ENCODE measurements at regions of chr13 and their contacts with region 1.

Region 1: DNA sequence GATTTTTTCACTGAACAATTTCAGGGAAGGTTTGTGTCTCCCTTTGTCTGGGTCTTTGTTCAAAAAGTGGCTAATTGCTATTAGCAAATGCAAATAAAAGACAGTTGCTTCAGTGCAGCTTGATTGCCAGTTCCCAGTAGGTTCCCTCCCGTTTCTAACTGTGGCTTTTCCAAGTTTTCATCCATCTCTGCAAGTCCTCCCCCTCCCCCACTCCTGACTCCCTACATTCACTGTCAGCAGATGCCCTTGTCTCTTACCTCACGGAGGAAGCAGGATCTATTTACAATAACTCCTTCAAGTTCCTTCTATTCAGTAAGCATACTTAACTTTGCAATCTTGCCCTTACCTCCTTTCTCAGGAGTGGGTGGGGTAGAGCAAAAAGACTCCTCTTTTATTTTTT is 55.4 kb upstream of the SCEL start:
- DNase-seq: no peak
- ATAC-seq: no peak
- H3K4me3 ChIP-seq: no peak overlapping the region
- H3K27ac ChIP-seq: no peak overlapping the region
- H3K4me1 ChIP-seq: no peaks in the 10 kb centered on the region
- H3K27me3 ChIP-seq: peaks cover 2% of the 10 kb centered on the region; the same call in 1 of the 2 replicates
- CTCF ChIP-seq: no peak
- POLR2A ChIP-seq: no peak
- RAD21 ChIP-seq: no peak

Region 2: GRCh38 chr13:77026818-77027585 is 453.1 kb before region 1 on chr13 and contains the start of gene FBXL3:
- CTCF ChIA-PET with region 1: no interaction called
- POLR2A ChIA-PET with region 1: no interaction called
- dilution Hi-C with region 1: no loop called
- in situ Hi-C with region 1: no loop called
- intact Hi-C with region 1: loop called (anchors 1 kb)
- DNase-seq: peak; percentile 94
- ATAC-seq: peak; percentile 81
- H3K4me3 ChIP-seq: peak within 1 kb of the TSS; percentile 93
- H3K27ac ChIP-seq: peak within 1 kb of the TSS; percentile 94
- H3K4me1 ChIP-seq: peaks cover 12% of the 10 kb centered on the region
- H3K27me3 ChIP-seq: no peaks in the 10 kb centered on the region
- CTCF ChIP-seq: no peak
- POLR2A ChIP-seq: peak; percentile 53; the same call in 1 of the 2 replicates
- RAD21 ChIP-seq: no peak
- total RNA-seq, gene FBXL3: 43.6 and 51.1 TPM in 2 replicates

Region 3: GRCh38 chr13:77274126-77274525 is 205.9 kb before region 1 on chr13:
- CTCF ChIA-PET with region 1: no interaction called
- POLR2A ChIA-PET with region 1: no interaction called
- dilution Hi-C with region 1: no loop called
- in situ Hi-C with region 1: no loop called
- intact Hi-C with region 1: loop called (anchors 5 kb)
- DNase-seq: no peak
- ATAC-seq: no peak
- H3K4me3 ChIP-seq: no peak overlapping the region
- H3K27ac ChIP-seq: no peak overlapping the region
- H3K4me1 ChIP-seq: no peaks in the 10 kb centered on the region
- H3K27me3 ChIP-seq: no peaks in the 10 kb centered on the region
- CTCF ChIP-seq: 0 out of 2 replicates have a peak, but pooled peaks have one; percentile 4
- POLR2A ChIP-seq: no peak
- RAD21 ChIP-seq: no peak